Caco-2 (cell line): ENCODE measurements at regions of chr17 and their contacts with region 1.

Region 1: GRCh38 chr17:46002311-46002972 is 3.4 kb downstream of the STH start:
- DNase-seq: peak; percentile 73 to 84
- H3K4me3 ChIP-seq: no peak overlapping the region
- H3K4me3 Mint-ChIP-seq: no peak overlapping the region
- H3K27ac Mint-ChIP-seq: no peak overlapping the region
- H3K4me1 ChIP-seq: no peaks in the 10 kb centered on the region
- H3K4me1 Mint-ChIP-seq: peaks cover 6% of the 10 kb centered on the region
- H3K27me3 ChIP-seq: no peaks in the 10 kb centered on the region
- H3K27me3 Mint-ChIP-seq: no peaks in the 10 kb centered on the region
- CTCF ChIP-seq: peak; percentile 87 to 97

Region 2: DNA sequence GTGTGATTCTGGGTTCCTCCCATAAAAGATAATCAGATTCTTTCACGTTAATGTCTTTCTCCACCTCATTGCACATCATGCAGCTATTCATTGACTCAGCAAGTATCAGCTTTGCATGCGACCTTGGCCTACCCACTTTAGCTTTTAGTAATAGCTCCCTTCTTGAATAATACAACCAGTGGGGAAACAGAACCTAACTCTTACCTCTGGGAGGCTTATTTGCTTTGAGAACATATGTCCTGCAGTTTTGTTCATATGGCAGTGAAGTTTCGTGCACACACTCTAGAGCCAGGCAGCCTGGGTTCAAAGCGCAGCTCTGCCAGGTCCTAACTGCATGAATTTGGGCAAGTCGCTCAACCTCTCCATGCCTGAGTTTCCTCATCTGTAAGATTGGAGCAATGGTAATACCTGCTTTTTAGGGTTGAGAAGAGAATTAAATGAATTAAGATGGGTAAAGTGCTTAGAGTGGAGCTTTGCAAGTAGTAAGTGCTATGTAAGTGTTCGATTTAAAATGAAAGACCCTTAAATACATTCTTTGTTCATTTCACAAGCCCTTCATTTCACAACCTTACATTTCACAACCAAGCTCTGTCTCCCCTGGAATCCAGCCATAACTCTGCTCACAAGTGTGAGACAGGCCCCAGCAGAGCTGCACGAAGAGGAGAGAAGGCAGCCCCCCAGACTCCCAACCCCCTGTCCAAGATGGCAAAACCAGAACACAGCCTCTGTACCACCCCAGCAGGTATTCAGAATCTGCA is 78.8 kb before region 1 on chr17:
- CTCF ChIA-PET with region 1: no interaction called
- POLR2A ChIA-PET with region 1: no interaction called
- intact Hi-C with region 1: no loop called
- DNase-seq: no peak
- H3K4me3 ChIP-seq: no peak overlapping the region
- H3K4me3 Mint-ChIP-seq: no peak overlapping the region
- H3K27ac Mint-ChIP-seq: no peak overlapping the region
- H3K4me1 ChIP-seq: 0 out of 2 replicates have a peak, but pooled peaks cover 6% of the 10 kb centered on the region
- H3K4me1 Mint-ChIP-seq: peaks cover 15% of the 10 kb centered on the region
- H3K27me3 ChIP-seq: no peaks in the 10 kb centered on the region; the same call in 1 of the 2 replicates
- H3K27me3 Mint-ChIP-seq: peaks cover 13% of the 10 kb centered on the region
- CTCF ChIP-seq: no peak

Region 3: DNA sequence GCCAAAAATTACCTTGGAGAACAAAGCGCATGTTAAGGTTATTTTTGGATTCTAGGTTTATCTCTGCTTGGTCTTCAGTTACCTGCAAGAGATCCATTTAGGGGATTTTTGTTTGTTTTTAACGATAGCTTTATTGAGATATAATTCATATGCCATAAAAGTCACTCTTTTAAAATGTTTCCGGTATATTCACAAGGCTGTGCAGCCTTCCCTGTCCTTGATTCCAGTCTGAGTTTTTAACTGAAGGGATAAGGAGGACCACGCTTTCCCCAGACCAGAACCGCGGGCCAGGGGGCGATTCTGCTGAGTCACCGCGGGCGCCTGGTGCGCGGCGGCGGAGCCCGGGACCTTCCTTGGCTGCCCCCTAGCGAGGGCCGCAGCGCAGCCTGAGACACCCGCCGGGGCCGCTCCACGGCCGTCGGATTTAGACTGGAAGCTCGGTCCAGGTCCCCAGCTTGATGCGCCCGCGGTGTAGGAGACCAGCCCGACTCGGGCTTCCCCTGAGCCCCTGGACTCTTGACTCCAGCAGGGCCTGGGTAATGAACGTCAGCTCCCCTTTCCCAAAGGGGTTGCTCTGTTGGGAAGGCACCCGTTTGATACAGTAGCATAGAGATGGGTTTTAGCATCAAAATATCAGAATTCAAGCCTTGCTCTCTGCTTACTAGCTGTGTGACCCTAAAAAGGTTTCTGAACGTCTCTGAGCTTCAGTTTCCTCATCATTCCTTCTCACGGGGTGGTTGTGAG is 53.4 kb before region 1 on chr17:
- CTCF ChIA-PET with region 1: no interaction called
- POLR2A ChIA-PET with region 1: no interaction called
- intact Hi-C with region 1: no loop called
- DNase-seq: peak; percentile 72 to 85
- H3K4me3 ChIP-seq: no peak overlapping the region
- H3K4me3 Mint-ChIP-seq: peak overlapping the region; percentile 66
- H3K27ac Mint-ChIP-seq: peak overlapping the region; percentile 77
- H3K4me1 ChIP-seq: no peaks in the 10 kb centered on the region
- H3K4me1 Mint-ChIP-seq: no peaks in the 10 kb centered on the region
- H3K27me3 ChIP-seq: no peaks in the 10 kb centered on the region
- H3K27me3 Mint-ChIP-seq: peaks cover 16% of the 10 kb centered on the region
- CTCF ChIP-seq: peak; percentile 72 to 88

Region 4: GRCh38 chr17:46193626-46194392 is 191.4 kb after region 1 on chr17:
- CTCF ChIA-PET with region 1: interaction called, 3 read pairs
- POLR2A ChIA-PET with region 1: no interaction called
- intact Hi-C with region 1: loop called (anchors 1 kb)
- DNase-seq: peak; percentile 93 to 94
- H3K4me3 ChIP-seq: peak overlapping the region; percentile 97
- H3K4me3 Mint-ChIP-seq: peak overlapping the region; percentile 98
- H3K27ac Mint-ChIP-seq: peak overlapping the region; percentile 23
- H3K4me1 ChIP-seq: peaks cover 27% of the 10 kb centered on the region
- H3K4me1 Mint-ChIP-seq: peaks cover 21% of the 10 kb centered on the region
- H3K27me3 ChIP-seq: no peaks in the 10 kb centered on the region
- H3K27me3 Mint-ChIP-seq: no peaks in the 10 kb centered on the region
- CTCF ChIP-seq: no peak